ENCODE measurements at regions of chr11 and their contacts with region 1.

Region 1: GRCh38 chr11:120682866-120683265 is 171.3 kb downstream of the GRIK4 start:
- DNase-seq: no peak
- ATAC-seq: no peak
- H3K4me3 ChIP-seq: no peak overlapping the region
- H3K27ac ChIP-seq: no peak overlapping the region
- H3K4me1 ChIP-seq: no peaks in the 10 kb centered on the region
- CTCF ChIP-seq: no peak
- EP300 ChIP-seq: no peak
- POLR2A ChIP-seq: no peak
- RAD21 ChIP-seq: no peak

Region 2: GRCh38 chr11:120586072-120586471 is 96.8 kb before region 1 on chr11:
- CTCF ChIA-PET with region 1: no interaction called
- POLR2A ChIA-PET with region 1: no interaction called
- DNase-seq: no peak
- ATAC-seq: no peak
- H3K4me3 ChIP-seq: no peak overlapping the region
- H3K27ac ChIP-seq: no peak overlapping the region
- H3K4me1 ChIP-seq: no peaks in the 10 kb centered on the region
- CTCF ChIP-seq: no peak
- EP300 ChIP-seq: no peak
- POLR2A ChIP-seq: no peak
- RAD21 ChIP-seq: no peak

Region 3: DNA sequence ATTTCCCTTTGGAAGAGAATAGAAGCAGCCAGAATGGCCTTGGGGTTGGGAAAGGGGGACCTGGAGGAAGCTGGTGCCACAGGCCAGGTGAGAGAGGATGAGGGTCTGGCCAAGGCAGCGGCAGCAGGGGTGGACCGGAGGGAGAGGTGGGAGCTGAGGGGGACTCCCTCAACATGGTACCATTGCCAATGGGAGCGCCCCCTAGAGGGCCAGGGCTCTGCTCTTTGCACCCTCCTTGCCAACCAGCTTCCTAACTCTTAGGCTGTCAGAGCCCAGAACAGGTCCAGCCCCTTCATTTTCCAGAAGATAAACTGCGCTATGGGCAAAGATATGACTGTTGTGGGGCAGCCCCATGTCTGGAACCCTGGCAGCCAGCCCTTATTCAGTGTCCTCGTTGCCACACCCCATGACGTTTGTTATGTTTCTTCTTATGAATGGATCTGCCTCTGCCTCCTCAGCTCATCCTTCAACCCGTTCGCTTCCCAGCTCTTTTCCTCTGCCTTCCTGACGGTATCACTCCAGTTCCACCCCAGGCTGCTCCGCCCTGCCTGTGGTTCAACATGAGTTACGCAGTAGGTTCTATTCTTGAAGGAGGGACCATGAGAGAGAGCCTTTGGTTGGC is 13.8 kb after region 1 on chr11:
- CTCF ChIA-PET with region 1: interaction called, 31 read pairs
- POLR2A ChIA-PET with region 1: no interaction called
- DNase-seq: no peak
- ATAC-seq: no peak
- H3K4me3 ChIP-seq: no peak overlapping the region
- H3K27ac ChIP-seq: no peak overlapping the region
- H3K4me1 ChIP-seq: no peaks in the 10 kb centered on the region
- CTCF ChIP-seq: no peak
- EP300 ChIP-seq: no peak
- POLR2A ChIP-seq: no peak
- RAD21 ChIP-seq: no peak

Region 4: DNA sequence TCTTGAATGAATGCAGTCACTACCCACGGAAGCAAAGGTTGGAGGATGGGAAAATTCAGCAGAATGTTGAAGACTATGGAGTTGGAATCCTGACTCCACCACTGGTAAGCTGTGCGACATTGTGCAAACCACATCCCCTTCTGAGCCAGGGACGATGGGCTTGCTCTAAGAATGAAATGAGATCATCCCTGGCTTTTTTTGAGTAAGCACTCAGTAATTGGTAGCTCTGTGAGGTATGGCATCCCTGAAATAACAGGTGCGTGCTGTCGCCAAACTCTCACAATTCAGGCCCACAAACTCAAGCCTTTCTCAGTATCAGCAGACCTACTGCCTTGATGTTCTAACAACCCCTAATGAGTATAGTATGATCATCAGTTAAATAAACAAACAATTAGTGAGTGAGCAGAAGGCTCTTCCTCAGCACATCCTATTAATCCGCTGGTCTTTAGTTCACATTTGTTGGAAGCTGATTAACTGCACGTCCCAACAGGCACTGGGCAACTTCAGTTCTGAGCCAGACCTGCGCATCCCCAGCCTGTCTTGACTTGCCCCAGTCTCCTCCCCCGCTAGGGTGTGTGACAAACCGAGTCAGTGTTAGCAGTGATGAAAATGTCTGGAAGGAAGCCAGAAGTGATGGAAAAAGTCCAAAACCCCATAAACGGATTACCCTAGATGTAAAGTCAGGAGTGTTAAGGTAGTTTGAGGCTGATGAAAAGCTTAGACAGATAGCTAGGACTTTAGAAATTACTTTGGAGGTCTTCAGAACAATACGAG is 64.2 kb after region 1 on chr11:
- CTCF ChIA-PET with region 1: no interaction called
- POLR2A ChIA-PET with region 1: no interaction called
- DNase-seq: no peak
- ATAC-seq: no peak
- H3K4me3 ChIP-seq: no peak overlapping the region
- H3K27ac ChIP-seq: no peak overlapping the region
- H3K4me1 ChIP-seq: no peaks in the 10 kb centered on the region
- CTCF ChIP-seq: no peak
- EP300 ChIP-seq: no peak
- POLR2A ChIP-seq: no peak
- RAD21 ChIP-seq: no peak